ENCODE measurements at regions of chr1 and their contacts with region 1.

Region 1: DNA sequence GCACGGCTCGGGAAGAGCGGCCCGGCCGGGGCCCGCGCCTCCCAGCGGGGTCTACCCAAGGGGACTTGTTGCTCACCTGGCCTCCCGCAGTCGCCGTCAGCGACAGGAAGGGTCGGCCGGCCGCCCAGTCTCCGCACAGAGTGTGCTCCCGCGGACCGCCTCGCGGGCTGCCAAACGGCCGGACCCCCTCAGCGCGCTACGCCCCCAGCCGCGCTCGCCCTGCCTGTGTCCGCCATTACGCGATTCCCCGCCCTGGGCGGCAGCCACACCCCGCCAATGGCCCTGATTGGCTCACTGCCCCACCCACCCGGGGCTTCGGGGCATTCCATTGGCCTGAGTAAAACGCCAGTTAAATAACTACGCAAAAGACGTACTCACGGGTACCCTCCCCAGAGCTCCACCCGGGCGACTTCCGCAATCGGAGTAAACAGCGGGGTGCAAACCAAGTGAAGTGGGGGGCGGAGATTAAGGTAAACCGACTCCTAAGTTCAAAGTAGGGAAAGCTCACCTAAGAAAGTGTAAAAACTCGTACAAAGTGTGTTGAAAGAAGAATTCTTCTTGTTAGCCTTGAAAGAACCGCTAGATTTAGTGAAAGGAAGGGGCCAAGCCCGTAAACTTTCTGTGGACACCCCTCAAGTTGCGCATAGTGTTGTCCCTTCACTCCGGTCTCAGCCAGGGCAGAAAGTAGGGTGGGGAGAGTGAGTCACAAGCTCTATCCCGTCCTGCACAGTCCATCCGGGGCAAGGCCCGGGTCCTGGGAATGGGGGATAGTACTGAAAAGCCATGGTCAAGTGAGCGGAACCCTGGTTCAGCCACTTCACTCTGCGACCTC is at the start of gene WASF2:
- DNase-seq: peak; percentile 96
- H3K4me3 Mint-ChIP-seq: peak within 1 kb of the TSS; percentile 85
- H3K27ac Mint-ChIP-seq: peak within 1 kb of the TSS; percentile 100
- H3K4me1 Mint-ChIP-seq: peaks cover 14% of the 10 kb centered on the region
- H3K27me3 Mint-ChIP-seq: no peaks in the 10 kb centered on the region
- CTCF ChIP-seq: no peak
- total RNA-seq, gene WASF2: 131 and 154 TPM in 2 replicates

Region 2: DNA sequence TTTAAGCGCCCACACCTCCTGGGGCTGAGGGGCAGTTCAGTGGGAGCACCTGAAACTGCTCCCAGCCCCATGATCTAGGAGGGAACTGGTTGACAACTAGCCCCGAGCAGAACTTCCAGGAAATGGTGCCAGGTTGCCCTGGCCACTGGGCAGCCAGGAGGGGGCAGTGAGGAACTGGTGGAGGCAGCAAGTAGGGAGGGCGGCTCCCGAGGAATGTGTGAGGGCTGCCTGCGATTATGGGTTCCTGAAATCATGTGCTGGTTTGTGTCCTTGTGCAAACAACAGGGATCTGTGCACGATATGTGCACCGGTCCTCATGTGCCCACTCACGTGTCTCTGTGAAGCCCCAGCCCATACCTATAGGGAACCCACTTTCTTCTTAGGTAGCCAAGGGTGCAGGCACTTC is 87.8 kb before region 1 on chr1:
- CTCF ChIA-PET with region 1: no interaction called
- POLR2A ChIA-PET with region 1: no interaction called
- intact Hi-C with region 1: no loop called
- DNase-seq: peak; percentile 57
- H3K4me3 Mint-ChIP-seq: no peak overlapping the region
- H3K27ac Mint-ChIP-seq: no peak overlapping the region
- H3K4me1 Mint-ChIP-seq: no peaks in the 10 kb centered on the region
- H3K27me3 Mint-ChIP-seq: no peaks in the 10 kb centered on the region
- CTCF ChIP-seq: peak; percentile 35

Region 3: DNA sequence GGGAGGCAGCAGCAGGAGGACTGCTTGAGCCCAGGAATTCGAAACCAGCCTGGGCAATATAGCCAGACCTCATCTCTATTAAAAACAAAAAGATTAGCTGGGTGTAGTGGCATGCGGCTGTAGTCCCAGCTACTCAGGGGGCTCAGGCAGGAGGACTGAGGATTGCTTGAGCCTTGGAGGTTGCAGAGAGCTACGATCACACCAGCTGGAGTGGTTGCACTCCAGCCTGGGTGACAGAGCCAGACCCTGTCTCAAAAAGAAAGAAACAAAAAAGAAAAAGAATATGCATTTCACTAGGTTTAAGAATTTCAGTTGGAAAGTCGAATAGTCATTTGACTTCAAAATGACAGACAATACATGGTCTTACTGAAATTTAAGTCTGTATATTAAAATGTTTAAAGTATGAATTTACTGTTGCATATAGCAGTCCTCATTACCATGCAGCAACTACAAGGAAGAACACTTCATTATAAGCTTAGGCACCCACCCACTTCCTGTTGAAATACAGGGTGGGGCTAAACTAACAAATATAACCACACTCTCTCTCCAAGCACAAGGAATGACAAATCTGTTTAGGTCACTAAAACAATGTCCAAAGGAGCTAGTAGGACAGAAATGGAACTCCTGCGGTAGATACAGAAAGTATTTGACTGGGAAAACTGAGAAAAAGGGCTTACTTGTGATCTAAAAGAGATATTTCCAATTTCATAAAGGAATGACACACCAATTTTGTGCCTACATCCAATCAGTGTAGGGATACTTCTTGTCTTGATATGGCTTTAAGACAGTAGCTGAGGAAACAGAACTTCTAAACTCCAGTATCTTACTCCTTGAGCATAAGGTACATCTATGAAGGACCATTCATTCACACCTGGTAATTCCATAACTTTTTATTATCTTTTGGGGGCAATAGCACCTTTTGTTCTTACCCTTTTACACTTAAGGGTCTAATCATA is 53.6 kb before region 1 on chr1:
- CTCF ChIA-PET with region 1: no interaction called
- POLR2A ChIA-PET with region 1: interaction called, 5 read pairs
- intact Hi-C with region 1: loop called (anchors 5 kb)
- DNase-seq: peak; percentile 66
- H3K4me3 Mint-ChIP-seq: peak overlapping the region; percentile 6
- H3K27ac Mint-ChIP-seq: no peak overlapping the region
- H3K4me1 Mint-ChIP-seq: peaks cover 32% of the 10 kb centered on the region
- H3K27me3 Mint-ChIP-seq: no peaks in the 10 kb centered on the region
- CTCF ChIP-seq: no peak

Region 4: GRCh38 chr1:27504588-27505419 is 14.7 kb after region 1 on chr1:
- CTCF ChIA-PET with region 1: no interaction called
- POLR2A ChIA-PET with region 1: interaction called, 19 read pairs
- intact Hi-C with region 1: no loop called
- DNase-seq: no peak
- H3K4me3 Mint-ChIP-seq: no peak overlapping the region
- H3K27ac Mint-ChIP-seq: peak overlapping the region; percentile 56
- H3K4me1 Mint-ChIP-seq: peaks cover 19% of the 10 kb centered on the region
- H3K27me3 Mint-ChIP-seq: no peaks in the 10 kb centered on the region
- CTCF ChIP-seq: no peak

Region 5: DNA sequence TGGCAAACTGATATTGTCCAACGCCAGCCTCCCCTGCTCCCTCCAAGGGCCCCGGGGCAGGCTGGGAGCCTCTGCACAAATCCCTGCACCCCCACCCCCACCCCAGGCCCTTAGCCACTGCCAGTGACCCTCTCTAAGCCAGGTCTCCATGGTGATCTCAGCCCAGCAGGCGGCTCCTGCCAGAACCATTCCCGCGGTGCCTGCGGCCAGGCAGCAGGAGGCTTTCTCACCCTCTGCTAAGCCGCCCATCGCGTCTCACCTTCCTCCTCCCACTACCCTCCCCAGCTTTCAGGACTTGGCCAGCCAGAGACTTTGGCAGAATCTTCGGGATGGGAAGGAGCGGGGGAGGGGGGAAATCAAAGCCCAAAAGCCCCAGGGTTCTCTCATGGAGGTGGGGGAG is 46.6 kb after region 1 on chr1:
- CTCF ChIA-PET with region 1: no interaction called
- POLR2A ChIA-PET with region 1: interaction called, 26 read pairs
- intact Hi-C with region 1: no loop called
- DNase-seq: peak; percentile 64
- H3K4me3 Mint-ChIP-seq: no peak overlapping the region
- H3K27ac Mint-ChIP-seq: no peak overlapping the region
- H3K4me1 Mint-ChIP-seq: peaks cover 30% of the 10 kb centered on the region
- H3K27me3 Mint-ChIP-seq: no peaks in the 10 kb centered on the region
- CTCF ChIP-seq: no peak

Region 6: DNA sequence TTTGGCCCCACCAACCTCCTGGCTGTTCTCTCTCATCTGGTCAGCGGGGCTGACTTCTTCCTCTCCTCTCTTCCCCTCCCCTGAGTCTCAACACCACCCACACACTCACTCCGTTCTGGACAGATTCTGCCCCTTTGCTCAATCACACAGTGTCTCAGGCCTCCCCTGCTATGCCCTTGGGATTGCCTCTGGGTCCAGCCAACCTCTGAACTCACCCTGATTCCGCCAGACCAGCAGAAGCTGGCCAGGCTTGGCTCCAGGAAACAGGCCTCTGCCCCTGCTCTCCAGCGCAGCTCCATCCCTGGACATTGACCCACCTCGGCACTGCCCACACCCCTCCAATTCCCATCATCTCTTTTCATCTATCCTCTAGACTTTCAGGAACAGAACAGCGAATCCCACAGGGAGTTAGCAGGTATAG is 91.7 kb after region 1 on chr1:
- CTCF ChIA-PET with region 1: no interaction called
- POLR2A ChIA-PET with region 1: interaction called, 12 read pairs
- intact Hi-C with region 1: no loop called
- DNase-seq: no peak
- H3K4me3 Mint-ChIP-seq: no peak overlapping the region
- H3K27ac Mint-ChIP-seq: no peak overlapping the region
- H3K4me1 Mint-ChIP-seq: peaks cover 24% of the 10 kb centered on the region
- H3K27me3 Mint-ChIP-seq: no peaks in the 10 kb centered on the region
- CTCF ChIP-seq: no peak